Activated B cell treated with CpG ODN at 0.5 μM for 24 hours (primary cell): ENCODE measurements at regions of chr1 and their contacts with region 1.

Region 1: GRCh38 chr1:174884038-174884437 is 115.7 kb upstream of the CACYBP start:
- DNase-seq: no peak
- ATAC-seq: no peak
- H3K4me3 Mint-ChIP-seq: no peak overlapping the region
- H3K27ac Mint-ChIP-seq: no peak overlapping the region
- H3K4me1 Mint-ChIP-seq: peaks cover 18% of the 10 kb centered on the region
- H3K27me3 Mint-ChIP-seq: no peaks in the 10 kb centered on the region
- CTCF ChIP-seq: no peak

Region 2: GRCh38 chr1:174800216-174800851 is 83.7 kb before region 1 on chr1:
- CTCF ChIA-PET with region 1: no interaction called
- POLR2A ChIA-PET with region 1: no interaction called
- intact Hi-C with region 1: no loop called
- DNase-seq: no peak
- ATAC-seq: no peak
- H3K4me3 Mint-ChIP-seq: no peak overlapping the region
- H3K27ac Mint-ChIP-seq: no peak overlapping the region
- H3K4me1 Mint-ChIP-seq: peaks cover 11% of the 10 kb centered on the region
- H3K27me3 Mint-ChIP-seq: no peaks in the 10 kb centered on the region
- CTCF ChIP-seq: no peak

Region 3: GRCh38 chr1:174902531-174903099 is 18.6 kb after region 1 on chr1:
- CTCF ChIA-PET with region 1: no interaction called
- POLR2A ChIA-PET with region 1: interaction called, 3 read pairs
- intact Hi-C with region 1: loop called (anchors 1 kb)
- DNase-seq: no peak
- ATAC-seq: no peak
- H3K4me3 Mint-ChIP-seq: no peak overlapping the region
- H3K27ac Mint-ChIP-seq: no peak overlapping the region
- H3K4me1 Mint-ChIP-seq: no peaks in the 10 kb centered on the region
- H3K27me3 Mint-ChIP-seq: no peaks in the 10 kb centered on the region
- CTCF ChIP-seq: no peak